HepG2 (cell line): ENCODE measurements at regions of chr4 and their contacts with region 1.

Region 1: GRCh38 chr4:20313237-20314030 is 61.7 kb downstream of the SLIT2 start:
- DNase-seq: peak; percentile 21
- ATAC-seq: peak; percentile 100
- H3K4me3 ChIP-seq: no peak overlapping the region
- H3K27ac ChIP-seq: no peak overlapping the region
- H3K4me1 ChIP-seq: no peaks in the 10 kb centered on the region
- H3K27me3 ChIP-seq: no peaks in the 10 kb centered on the region
- CTCF ChIP-seq: peak; percentile 69
- EP300 ChIP-seq: no peak
- POLR2A ChIP-seq: no peak
- RAD21 ChIP-seq: no peak

Region 2: GRCh38 chr4:20428436-20429160 is 115.2 kb after region 1 on chr4:
- CTCF ChIA-PET with region 1: no interaction called
- POLR2A ChIA-PET with region 1: no interaction called
- in situ Hi-C with region 1: no loop called
- intact Hi-C with region 1: loop called (anchors 1 kb)
- DNase-seq: no peak
- ATAC-seq: peak; percentile 50; the same call in 2 of the 3 replicates
- H3K4me3 ChIP-seq: no peak overlapping the region
- H3K27ac ChIP-seq: no peak overlapping the region
- H3K4me1 ChIP-seq: no peaks in the 10 kb centered on the region
- H3K27me3 ChIP-seq: no peaks in the 10 kb centered on the region; a peak in 1 of 5 replicates
- CTCF ChIP-seq: peak; percentile 31
- EP300 ChIP-seq: no peak
- POLR2A ChIP-seq: no peak
- RAD21 ChIP-seq: no peak

Region 3: GRCh38 chr4:20544645-20545044 is 231.2 kb after region 1 on chr4:
- CTCF ChIA-PET with region 1: no interaction called
- POLR2A ChIA-PET with region 1: no interaction called
- in situ Hi-C with region 1: no loop called
- intact Hi-C with region 1: loop called (anchors 2 kb)
- DNase-seq: peak; percentile 14
- ATAC-seq: peak; percentile 54; the same call in 2 of the 3 replicates
- H3K4me3 ChIP-seq: no peak overlapping the region
- H3K27ac ChIP-seq: no peak overlapping the region
- H3K4me1 ChIP-seq: no peaks in the 10 kb centered on the region
- H3K27me3 ChIP-seq: no peaks in the 10 kb centered on the region
- CTCF ChIP-seq: peak; percentile 48
- EP300 ChIP-seq: no peak
- POLR2A ChIP-seq: no peak
- RAD21 ChIP-seq: no peak